ENCODE measurements at regions of chr14 and their contacts with region 1.

Region 1: GRCh38 chr14:81269100-81269978 is 48.6 kb upstream of the GTF2A1 start:
- DNase-seq: peak in 2 of 4 donors; percentile 45 to 53
- ATAC-seq: peak; percentile 94
- H3K4me3 ChIP-seq: no peak overlapping the region
- H3K27ac ChIP-seq: no peak overlapping the region
- H3K4me1 ChIP-seq: no peaks in the 10 kb centered on the region
- H3K27me3 ChIP-seq: no peaks in the 10 kb centered on the region
- CTCF ChIP-seq: peak; percentile 66 to 70

Region 2: DNA sequence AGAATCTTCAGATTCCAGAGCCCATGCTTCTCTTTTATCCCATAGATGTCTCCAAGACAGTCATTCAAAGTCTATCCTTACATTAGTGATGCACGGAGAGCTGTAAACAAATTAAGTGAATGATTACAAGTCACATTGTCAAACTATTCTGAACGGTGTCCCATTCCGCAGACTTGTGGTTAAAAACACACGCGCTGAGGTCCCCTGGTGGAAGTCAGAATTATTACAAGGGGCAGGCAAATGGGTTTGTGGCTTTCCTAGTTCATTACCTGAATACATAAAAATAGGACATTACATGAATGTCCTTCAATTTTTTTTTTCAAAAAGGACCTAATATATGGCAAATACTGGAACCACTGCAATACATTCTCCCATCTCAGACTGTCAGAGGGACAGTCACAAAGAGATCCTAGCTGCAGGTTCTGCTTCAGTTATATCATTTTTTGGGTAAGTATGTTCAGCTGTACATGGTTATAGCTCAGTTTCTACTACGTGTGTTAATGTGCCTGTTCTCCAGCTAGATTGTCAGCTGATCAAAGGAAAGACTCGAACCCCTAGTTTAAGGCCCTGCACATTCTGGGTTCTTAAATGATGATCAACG is 183.9 kb after region 1 on chr14:
- intact Hi-C with region 1: loop called in 1 of 2 experiments (anchors 5 kb)
- DNase-seq: peak in 2 of 4 donors; percentile 32 to 48
- ATAC-seq: peak; percentile 84
- H3K4me3 ChIP-seq: no peak overlapping the region
- H3K27ac ChIP-seq: no peak overlapping the region
- H3K4me1 ChIP-seq: peaks cover 4 to 11% of the 10 kb centered on the region in 2 donors
- H3K27me3 ChIP-seq: peaks cover 0 to 20% of the 10 kb centered on the region in 2 donors
- CTCF ChIP-seq: peak; percentile 83 to 86